Naive thymus-derived CD4-positive, alpha-beta T cell (primary cell): ENCODE measurements at regions of chr11 and their contacts with region 1.

Region 1: DNA sequence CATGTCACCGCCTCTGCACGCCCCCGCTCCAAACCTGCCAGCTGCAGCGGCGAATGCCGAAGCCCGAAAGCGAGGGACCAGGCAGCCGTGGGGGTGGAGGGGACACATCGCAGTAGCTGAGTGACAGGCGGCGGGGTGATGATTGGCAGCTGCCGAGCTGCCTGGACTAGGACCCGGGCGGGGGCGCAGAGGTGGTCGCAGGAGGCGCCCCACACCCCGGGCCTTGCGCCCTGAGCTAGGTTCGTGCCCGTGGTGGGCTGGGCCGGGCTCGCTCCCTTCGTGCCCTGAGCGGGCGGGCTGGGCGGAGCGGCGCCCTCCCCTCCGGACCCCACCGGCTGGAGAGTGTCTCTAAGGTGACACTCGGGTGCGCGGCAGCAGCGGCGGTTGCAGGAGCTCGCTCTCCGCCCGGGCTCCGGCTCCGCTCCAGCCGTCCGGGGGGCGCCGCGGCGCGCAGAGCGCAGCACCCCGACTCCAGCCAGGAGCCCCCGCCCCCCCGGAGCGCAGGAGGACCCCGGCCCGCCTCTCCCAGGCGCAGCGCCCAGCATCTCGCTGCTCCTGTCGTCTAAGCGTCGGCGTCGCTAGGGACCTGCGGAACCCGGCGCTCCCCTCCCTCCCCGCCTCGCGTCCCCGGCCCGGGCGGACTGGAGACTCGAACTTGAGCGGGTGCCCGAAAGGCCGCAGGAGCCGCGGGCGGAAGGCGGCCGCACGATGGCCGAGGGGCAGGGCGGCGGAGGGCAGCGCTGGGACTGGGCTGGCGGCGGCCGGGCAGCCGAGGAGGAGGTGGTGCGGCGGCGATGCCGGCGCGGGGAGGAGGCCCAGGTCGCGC is 14.5 kb upstream of the DGKZ start:
- DNase-seq: peak in 6 of 9 donors; percentile 49 to 66 (median 56)
- ATAC-seq: peak; percentile 28
- H3K4me3 ChIP-seq: peak overlapping the region; percentile 66
- H3K4me3 Mint-ChIP-seq: peak overlapping the region; percentile 66 to 97 (median 90)
- H3K27ac ChIP-seq: peak overlapping the region; percentile 71
- H3K27ac Mint-ChIP-seq: peak overlapping the region in 8 of 9 donors; percentile 86 to 98 (median 96)
- H3K4me1 ChIP-seq: peaks cover 29 to 71% of the 10 kb centered on the region in 2 donors
- H3K4me1 Mint-ChIP-seq: peaks cover 40 to 83% (median 71%) of the 10 kb centered on the region in 7 donors
- H3K27me3 ChIP-seq: peaks cover 0 to 3% of the 10 kb centered on the region in 2 donors
- H3K27me3 Mint-ChIP-seq: peaks cover 0 to 59% (median 0%) of the 10 kb centered on the region in 5 donors

Region 2: GRCh38 chr11:46295312-46296058 is 37.3 kb before region 1 on chr11:
- CTCF ChIA-PET with region 1: interaction called, 5 read pairs
- POLR2A ChIA-PET with region 1: interaction called, 5 read pairs
- intact Hi-C with region 1: loop called in 1 of 2 experiments (anchors 1 kb)
- DNase-seq: peak; percentile 65 to 82 (median 80)
- ATAC-seq: peak; percentile 98
- H3K4me3 ChIP-seq: peak overlapping the region; percentile 78
- H3K4me3 Mint-ChIP-seq: peak overlapping the region; percentile 83 to 92 (median 86)
- H3K27ac ChIP-seq: peak overlapping the region; percentile 34
- H3K27ac Mint-ChIP-seq: peak overlapping the region in 3 of 9 donors; percentile 32 to 48 (median 38)
- H3K4me1 ChIP-seq: peaks cover 5 to 7% of the 10 kb centered on the region in 2 donors
- H3K4me1 Mint-ChIP-seq: peaks cover 0 to 15% (median 7%) of the 10 kb centered on the region in 7 donors
- H3K27me3 ChIP-seq: peaks cover 5 to 6% of the 10 kb centered on the region in 2 donors
- H3K27me3 Mint-ChIP-seq: peaks cover 0 to 35% (median 5%) of the 10 kb centered on the region in 5 donors

Region 3: GRCh38 chr11:46315033-46315738 is 17.6 kb before region 1 on chr11:
- CTCF ChIA-PET with region 1: interaction called, 42 read pairs
- POLR2A ChIA-PET with region 1: interaction called, 40 read pairs
- intact Hi-C with region 1: loop called in 1 of 2 experiments (anchors 1 kb)
- DNase-seq: peak; percentile 42 to 76 (median 60)
- ATAC-seq: peak; percentile 88
- H3K4me3 ChIP-seq: no peak overlapping the region
- H3K4me3 Mint-ChIP-seq: peak overlapping the region in 2 of 10 donors; percentile 9 to 40
- H3K27ac ChIP-seq: no peak overlapping the region
- H3K27ac Mint-ChIP-seq: peak overlapping the region in 2 of 9 donors; percentile 2 to 63
- H3K4me1 ChIP-seq: peaks cover 6 to 16% of the 10 kb centered on the region in 2 donors
- H3K4me1 Mint-ChIP-seq: peaks cover 22 to 35% (median 24%) of the 10 kb centered on the region in 7 donors
- H3K27me3 ChIP-seq: no peaks in the 10 kb centered on the region
- H3K27me3 Mint-ChIP-seq: no peaks in the 10 kb centered on the region

Region 4: DNA sequence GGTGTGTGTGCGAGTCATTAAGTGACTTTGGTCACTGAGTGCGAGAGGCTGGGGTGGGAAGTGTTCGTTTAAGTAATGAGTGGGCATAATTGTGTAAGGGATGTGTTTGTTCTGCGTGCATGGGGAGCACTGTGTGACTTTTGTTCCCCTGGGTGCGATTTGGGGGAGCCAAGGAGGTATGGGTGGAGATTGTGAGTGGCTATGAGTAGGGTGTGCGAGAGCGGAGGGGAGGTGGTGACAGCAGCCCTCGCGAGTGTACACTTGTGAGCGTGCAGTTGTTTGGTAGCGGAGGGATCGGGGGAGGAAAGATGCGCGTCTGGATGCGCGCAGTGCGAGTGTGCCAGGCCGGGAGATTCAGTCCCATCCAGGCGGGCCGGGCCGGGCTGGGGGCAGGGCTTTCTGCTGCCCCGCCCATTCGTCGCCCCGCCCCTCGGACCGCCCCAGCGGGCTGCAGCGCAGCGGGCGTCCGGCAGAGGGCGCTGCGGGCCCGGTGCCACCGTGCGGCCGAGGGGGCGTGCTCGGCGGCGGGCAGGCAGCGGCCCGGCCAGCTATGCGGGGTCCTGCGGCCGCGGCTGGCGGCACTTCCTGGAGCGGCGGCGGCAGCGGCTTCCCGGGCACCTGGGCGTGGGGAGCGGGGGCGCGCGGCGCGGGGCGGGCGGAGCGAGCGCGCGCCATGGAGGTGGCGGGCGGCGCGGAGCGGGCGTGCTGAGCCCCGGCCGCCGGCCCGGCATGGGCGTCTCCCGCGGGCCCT is 14.3 kb after region 1 on chr11 and contains the start of gene DGKZ:
- CTCF ChIA-PET with region 1: interaction called, 112 read pairs
- POLR2A ChIA-PET with region 1: interaction called, 444 read pairs
- intact Hi-C with region 1: loop called (anchors 1 to 2 kb)
- DNase-seq: peak; percentile 85 to 100 (median 96)
- ATAC-seq: peak; percentile 92
- H3K4me3 ChIP-seq: peak within 1 kb of the TSS; percentile 91
- H3K4me3 Mint-ChIP-seq: peak within 1 kb of the TSS; percentile 93 to 97 (median 95)
- H3K27ac ChIP-seq: peak within 1 kb of the TSS; percentile 83
- H3K27ac Mint-ChIP-seq: peak within 1 kb of the TSS; percentile 89 to 98 (median 94)
- H3K4me1 ChIP-seq: peaks cover 46 to 79% of the 10 kb centered on the region in 2 donors
- H3K4me1 Mint-ChIP-seq: peaks cover 61 to 85% (median 75%) of the 10 kb centered on the region in 7 donors
- H3K27me3 ChIP-seq: no peaks in the 10 kb centered on the region
- H3K27me3 Mint-ChIP-seq: peaks cover 0 to 3% (median 0%) of the 10 kb centered on the region in 5 donors
- total RNA-seq, gene DGKZ: 146 to 291 (median 263) TPM

Region 5: DNA sequence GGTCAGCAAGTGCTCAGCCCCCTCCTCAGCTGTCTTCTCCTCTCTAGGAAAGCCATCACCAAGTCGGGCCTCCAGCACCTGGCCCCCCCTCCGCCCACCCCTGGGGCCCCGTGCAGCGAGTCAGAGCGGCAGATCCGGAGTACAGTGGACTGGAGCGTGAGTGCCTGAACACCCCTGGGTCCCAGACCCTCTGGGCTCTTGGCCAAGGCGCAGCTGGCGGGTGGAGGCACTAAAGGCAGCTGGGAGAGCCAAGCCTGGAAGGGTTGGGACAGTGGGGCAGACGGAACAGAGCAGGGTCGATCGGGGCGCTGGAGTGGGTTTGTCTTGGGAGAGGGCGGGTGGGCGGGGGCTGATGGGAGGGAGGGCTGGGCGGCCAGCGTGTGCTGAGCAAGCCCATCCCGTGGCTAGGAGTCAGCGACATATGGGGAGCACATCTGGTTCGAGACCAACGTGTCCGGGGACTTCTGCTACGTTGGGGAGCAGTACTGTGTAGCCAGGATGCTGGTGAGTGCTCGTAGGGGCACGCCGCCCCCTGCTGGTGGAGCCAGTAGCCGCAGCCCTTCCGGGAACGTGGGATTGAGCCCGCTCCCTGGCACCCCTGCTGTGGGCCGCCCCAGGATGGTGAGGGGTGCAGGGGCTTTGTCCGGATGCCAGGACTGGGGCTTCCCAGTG is 34.6 kb after region 1 on chr11:
- CTCF ChIA-PET with region 1: interaction called, 3 read pairs
- POLR2A ChIA-PET with region 1: interaction called, 5 read pairs
- intact Hi-C with region 1: loop called in 1 of 2 experiments (anchors 1 kb)
- DNase-seq: peak; percentile 65 to 84 (median 77)
- ATAC-seq: peak; percentile 86
- H3K4me3 ChIP-seq: no peak overlapping the region
- H3K4me3 Mint-ChIP-seq: peak overlapping the region in 5 of 10 donors; percentile 21 to 50 (median 45)
- H3K27ac ChIP-seq: peak overlapping the region; percentile 30
- H3K27ac Mint-ChIP-seq: peak overlapping the region in 5 of 9 donors; percentile 17 to 83 (median 63)
- H3K4me1 ChIP-seq: peaks cover 6 to 25% of the 10 kb centered on the region in 2 donors
- H3K4me1 Mint-ChIP-seq: peaks cover 20 to 52% (median 38%) of the 10 kb centered on the region in 7 donors
- H3K27me3 ChIP-seq: no peaks in the 10 kb centered on the region
- H3K27me3 Mint-ChIP-seq: no peaks in the 10 kb centered on the region